Cardiac septum (tissue), 1 donor: ENCODE measurements at regions of chr9 and their contacts with region 1.

Region 1: GRCh38 chr9:34759432-34760134 is 49.6 kb upstream of the CCL21 start:
- DNase-seq: no peak

Region 2: GRCh38 chr9:34866614-34867013 is 107.0 kb after region 1 on chr9:
- intact Hi-C with region 1: loop called (anchors 2 kb)
- DNase-seq: no peak

Region 3: GRCh38 chr9:34989003-34989945 is 229.7 kb after region 1 on chr9 and contains the start of gene DNAJB5:
- intact Hi-C with region 1: loop called (anchors 10 kb)
- DNase-seq: peak; percentile 99
- total RNA-seq, gene DNAJB5: 133 TPM